Activated CD4-positive, alpha-beta T cell treated with anti-CD3 and anti-CD28 coated beads for 36 hours (primary cell): ENCODE measurements at regions of chr1 and their contacts with region 1.

Region 1: GRCh38 chr1:113793878-113794834 is 18.1 kb downstream of the RSBN1 start:
- DNase-seq: no peak
- ATAC-seq: no peak
- H3K4me3 Mint-ChIP-seq: no peak overlapping the region
- H3K27ac Mint-ChIP-seq: no peak overlapping the region
- H3K4me1 Mint-ChIP-seq: peaks cover 63% of the 10 kb centered on the region
- H3K27me3 Mint-ChIP-seq: no peaks in the 10 kb centered on the region

Region 2: DNA sequence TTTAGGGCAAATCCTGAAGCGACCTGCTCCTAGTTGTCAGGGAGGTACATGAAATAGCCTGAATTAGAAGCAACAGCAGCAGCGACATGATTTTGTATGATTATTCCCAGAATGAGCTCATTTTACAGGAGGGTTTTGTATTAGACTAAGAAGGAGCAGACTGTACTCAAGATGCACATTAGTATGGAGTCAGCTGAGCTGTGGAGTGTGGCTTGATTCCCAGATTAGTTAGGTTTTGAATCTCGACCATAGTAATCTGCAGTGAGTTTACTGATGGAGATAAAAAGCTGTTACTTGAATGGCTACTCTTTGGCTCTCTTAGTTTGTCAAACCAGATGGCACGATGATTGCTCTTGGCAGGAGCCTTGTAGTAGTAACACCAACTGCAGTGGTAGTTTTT is 178.0 kb before region 1 on chr1:
- CTCF ChIA-PET with region 1: no interaction called
- POLR2A ChIA-PET with region 1: no interaction called
- intact Hi-C with region 1: loop called in 1 of 2 experiments (anchors 5 kb)
- DNase-seq: no peak
- ATAC-seq: no peak
- H3K4me3 Mint-ChIP-seq: no peak overlapping the region
- H3K27ac Mint-ChIP-seq: no peak overlapping the region
- H3K4me1 Mint-ChIP-seq: peaks cover 13% of the 10 kb centered on the region
- H3K27me3 Mint-ChIP-seq: no peaks in the 10 kb centered on the region

Region 3: GRCh38 chr1:113859478-113860175 is 65.5 kb after region 1 on chr1:
- CTCF ChIA-PET with region 1: no interaction called
- POLR2A ChIA-PET with region 1: no interaction called
- intact Hi-C with region 1: no loop called
- DNase-seq: no peak
- ATAC-seq: peak; percentile 63
- H3K4me3 Mint-ChIP-seq: no peak overlapping the region
- H3K27ac Mint-ChIP-seq: peak overlapping the region; percentile 55
- H3K4me1 Mint-ChIP-seq: peaks cover 39% of the 10 kb centered on the region
- H3K27me3 Mint-ChIP-seq: no peaks in the 10 kb centered on the region